ENCODE measurements at regions of chr1 and their contacts with region 1.

Region 1: GRCh38 chr1:1943834-1944570 is 24.9 kb upstream of the TMEM52 start:
- DNase-seq: peak; percentile 56 to 86 (median 81)
- ATAC-seq: peak; percentile 74 to 87
- H3K4me3 ChIP-seq: no peak overlapping the region
- H3K27ac ChIP-seq: no peak overlapping the region
- H3K4me1 ChIP-seq: no peaks in the 10 kb centered on the region
- H3K27me3 ChIP-seq: no peaks in the 10 kb centered on the region

Region 2: GRCh38 chr1:2044510-2045319 is 100.7 kb after region 1 on chr1:
- intact Hi-C with region 1: loop called in 3 of 4 experiments (anchors 5 kb)
- DNase-seq: peak; percentile 72 to 91 (median 90)
- ATAC-seq: peak; percentile 69 to 71
- H3K4me3 ChIP-seq: no peak overlapping the region
- H3K27ac ChIP-seq: no peak overlapping the region
- H3K4me1 ChIP-seq: no peaks in the 10 kb centered on the region
- H3K27me3 ChIP-seq: no peaks in the 10 kb centered on the region

Region 3: DNA sequence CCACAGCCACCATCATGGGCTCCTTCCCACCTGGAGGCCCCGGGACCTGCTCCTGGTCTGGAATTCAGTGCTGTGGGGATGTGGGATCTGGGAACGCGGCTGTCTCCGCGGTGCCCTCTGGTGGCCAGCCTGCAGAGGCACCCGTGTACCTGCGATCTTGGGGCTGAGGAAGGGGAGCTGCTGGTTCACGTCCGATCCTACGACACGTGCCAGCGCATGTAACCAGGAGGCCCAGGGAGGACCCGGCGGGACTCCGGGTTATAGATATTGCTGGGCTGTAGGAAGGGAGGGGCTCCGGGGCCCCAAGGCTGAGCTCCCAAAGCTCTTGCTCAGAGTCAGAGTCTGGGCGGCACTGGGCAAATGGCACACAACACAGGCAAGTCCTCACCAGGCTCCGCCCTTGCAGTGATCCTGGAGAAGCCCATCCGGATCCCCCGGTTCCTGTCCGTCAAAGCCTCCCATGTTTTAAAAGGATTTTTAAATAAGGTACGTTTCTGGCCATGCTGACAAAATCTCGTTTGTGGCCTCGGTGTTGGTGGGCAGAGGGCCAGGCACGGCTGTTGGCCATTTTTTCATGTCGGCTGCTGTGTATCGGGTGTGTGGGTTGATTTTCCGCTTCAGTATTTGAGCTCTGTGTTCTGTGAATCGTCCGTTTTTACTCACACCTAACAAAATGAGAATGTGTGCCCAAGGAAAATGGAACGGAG is 230.5 kb after region 1 on chr1:
- intact Hi-C with region 1: loop called in 1 of 4 experiments (anchors 10 kb)
- DNase-seq: peak; percentile 63 to 86 (median 80)
- ATAC-seq: peak; percentile 67 to 80
- H3K4me3 ChIP-seq: peak overlapping the region; percentile 36
- H3K27ac ChIP-seq: no peak overlapping the region
- H3K4me1 ChIP-seq: no peaks in the 10 kb centered on the region
- H3K27me3 ChIP-seq: no peaks in the 10 kb centered on the region